Calu3 (cell line): ENCODE measurements at regions of chr12 and their contacts with region 1.

Region 1: DNA sequence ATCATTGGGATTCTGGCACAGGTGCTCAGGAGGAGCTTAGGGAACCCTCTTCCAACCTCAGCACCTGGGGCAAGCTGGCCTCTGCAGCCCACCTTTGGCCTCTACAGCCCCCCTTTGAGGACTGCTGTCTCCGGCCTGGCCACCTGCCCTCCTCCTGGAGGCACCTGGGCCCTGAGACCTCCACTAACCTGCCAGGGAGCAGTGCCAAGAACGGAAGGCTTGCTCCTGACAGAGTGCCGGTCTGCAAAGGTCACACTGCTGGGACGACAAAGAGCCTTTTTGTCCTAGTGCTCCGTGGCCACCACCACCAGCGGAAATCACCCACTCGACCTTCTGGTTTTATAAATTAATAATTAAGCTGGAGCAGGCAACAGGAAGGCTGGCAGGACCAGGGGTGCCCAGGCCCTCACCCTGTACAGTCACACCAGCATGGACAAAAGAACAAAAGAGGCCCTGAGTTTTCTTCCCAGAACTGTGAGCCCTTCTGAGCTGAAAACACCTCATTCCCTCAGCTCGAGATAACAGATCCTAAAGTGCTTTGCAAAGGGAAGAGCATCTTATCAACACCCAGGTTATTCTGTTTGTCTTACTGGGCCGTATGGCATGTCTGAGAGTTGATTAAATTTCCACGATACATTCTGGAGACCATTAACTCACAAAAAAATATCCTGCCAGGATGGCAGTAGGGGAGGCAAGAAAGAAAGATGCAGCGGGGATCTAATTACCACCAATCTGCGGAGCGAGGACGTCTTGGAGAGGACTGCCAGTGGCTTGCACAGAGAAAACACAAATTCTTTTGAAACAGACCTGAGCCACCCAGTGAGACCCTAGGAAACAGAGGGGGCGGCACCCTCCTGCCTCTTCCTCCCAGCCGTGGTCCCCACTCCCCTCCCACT is 8.2 kb downstream of the TESC start:
- DNase-seq: peak; percentile 92
- H3K4me3 Mint-ChIP-seq: peak overlapping the region; percentile 71
- H3K27ac Mint-ChIP-seq: peak overlapping the region; percentile 99
- H3K4me1 Mint-ChIP-seq: peaks cover 88% of the 10 kb centered on the region
- H3K27me3 Mint-ChIP-seq: no peaks in the 10 kb centered on the region
- CTCF ChIP-seq: no peak

Region 2: GRCh38 chr12:116794725-116795124 is 296.3 kb before region 1 on chr12:
- CTCF ChIA-PET with region 1: no interaction called
- intact Hi-C with region 1: no loop called
- DNase-seq: no peak
- H3K4me3 Mint-ChIP-seq: no peak overlapping the region
- H3K27ac Mint-ChIP-seq: no peak overlapping the region
- H3K4me1 Mint-ChIP-seq: no peaks in the 10 kb centered on the region
- H3K27me3 Mint-ChIP-seq: no peaks in the 10 kb centered on the region
- CTCF ChIP-seq: no peak

Region 3: GRCh38 chr12:117042171-117042842 is 48.8 kb before region 1 on chr12:
- CTCF ChIA-PET with region 1: interaction called, 4 read pairs
- intact Hi-C with region 1: loop called (anchors 5 kb)
- DNase-seq: peak; percentile 65
- H3K4me3 Mint-ChIP-seq: peak overlapping the region; percentile 39
- H3K27ac Mint-ChIP-seq: peak overlapping the region; percentile 84
- H3K4me1 Mint-ChIP-seq: peaks cover 34% of the 10 kb centered on the region
- H3K27me3 Mint-ChIP-seq: no peaks in the 10 kb centered on the region
- CTCF ChIP-seq: no peak

Region 4: GRCh38 chr12:117143008-117143532 is 52.0 kb after region 1 on chr12:
- CTCF ChIA-PET with region 1: interaction called, 3 read pairs
- intact Hi-C with region 1: loop called (anchors 5 kb)
- DNase-seq: peak; percentile 90
- H3K4me3 Mint-ChIP-seq: peak overlapping the region; percentile 57
- H3K27ac Mint-ChIP-seq: peak overlapping the region; percentile 87
- H3K4me1 Mint-ChIP-seq: peaks cover 31% of the 10 kb centered on the region
- H3K27me3 Mint-ChIP-seq: no peaks in the 10 kb centered on the region
- CTCF ChIP-seq: no peak

Region 5: DNA sequence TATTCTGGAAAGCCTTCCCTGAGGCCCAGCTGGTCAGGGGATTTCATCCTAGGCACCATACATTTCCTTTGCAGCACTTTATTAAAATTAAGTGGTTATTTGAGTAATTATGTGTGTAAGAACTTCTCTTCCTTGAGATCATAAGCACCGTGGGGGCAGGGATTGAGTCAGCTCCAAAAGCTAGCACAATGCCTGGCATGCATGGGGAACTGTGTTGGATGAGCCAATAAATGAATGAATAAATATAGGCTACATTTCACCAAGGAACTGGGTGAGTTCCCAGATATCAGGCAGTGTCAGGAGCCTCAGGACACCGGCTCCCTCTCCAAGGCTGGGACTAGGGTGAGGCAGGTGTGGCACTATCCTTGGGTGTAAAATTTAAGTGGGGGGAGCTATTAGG is 182.0 kb after region 1 on chr12:
- CTCF ChIA-PET with region 1: no interaction called
- intact Hi-C with region 1: no loop called
- DNase-seq: no peak
- H3K4me3 Mint-ChIP-seq: no peak overlapping the region
- H3K27ac Mint-ChIP-seq: no peak overlapping the region
- H3K4me1 Mint-ChIP-seq: no peaks in the 10 kb centered on the region
- H3K27me3 Mint-ChIP-seq: peaks cover 72% of the 10 kb centered on the region
- CTCF ChIP-seq: no peak

Region 6: GRCh38 chr12:117447665-117448366 is 356.8 kb after region 1 on chr12:
- CTCF ChIA-PET with region 1: no interaction called
- intact Hi-C with region 1: no loop called
- DNase-seq: no peak
- H3K4me3 Mint-ChIP-seq: no peak overlapping the region
- H3K27ac Mint-ChIP-seq: no peak overlapping the region
- H3K4me1 Mint-ChIP-seq: no peaks in the 10 kb centered on the region
- H3K27me3 Mint-ChIP-seq: peaks cover 21% of the 10 kb centered on the region
- CTCF ChIP-seq: no peak